Activated CD4-positive, alpha-beta T cell treated with anti-CD3 and anti-CD28 coated beads, Interleukin-2, amount 10 ng/mL, durations not matched to agents 24 days and 14 days (primary cell): ENCODE measurements at regions of chr1 and their contacts with region 1.

Region 1: DNA sequence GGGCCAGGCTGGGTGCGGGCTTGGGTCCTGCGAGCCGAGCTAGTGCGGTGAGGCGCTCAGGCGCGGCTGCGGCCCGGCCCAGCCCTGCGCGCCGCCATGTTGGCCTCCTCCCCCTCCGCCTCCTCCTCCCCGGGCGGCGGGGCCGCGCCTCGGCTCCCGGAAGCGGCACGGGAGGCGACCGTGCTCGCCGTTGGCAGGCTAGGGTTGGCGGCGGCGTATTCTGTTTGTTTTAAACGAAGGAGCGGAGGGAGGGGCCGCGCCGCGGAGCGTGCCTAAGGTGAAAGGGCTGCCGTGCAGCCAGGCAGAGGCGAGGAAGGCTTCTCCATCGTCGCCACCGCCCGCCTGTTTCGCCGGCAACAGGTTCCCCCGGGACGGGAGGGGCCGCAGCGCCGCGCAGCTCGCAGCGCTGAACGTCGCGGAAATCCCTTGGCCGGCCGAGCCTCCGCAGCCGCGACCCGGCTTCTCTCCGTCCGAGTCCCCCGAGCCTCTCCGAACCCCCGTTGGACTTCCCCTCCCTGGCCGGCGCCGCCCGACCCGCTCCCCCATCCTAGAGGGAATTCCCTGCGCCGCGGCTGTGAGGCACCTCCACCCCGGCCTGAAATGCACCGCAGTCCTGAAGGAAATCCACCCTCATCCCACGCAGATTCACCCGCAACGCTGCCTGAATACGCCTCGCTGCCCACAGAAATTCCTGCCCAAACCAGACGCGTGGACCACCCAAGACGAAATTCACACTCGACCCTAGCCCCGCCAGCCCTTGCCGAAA is at the start of gene USP24:
- DNase-seq: peak; percentile 96
- H3K4me3 Mint-ChIP-seq: peak within 1 kb of the TSS; percentile 97
- H3K27ac Mint-ChIP-seq: peak within 1 kb of the TSS; percentile 93
- H3K4me1 Mint-ChIP-seq: peaks cover 57% of the 10 kb centered on the region
- H3K27me3 Mint-ChIP-seq: peaks cover under 1% of the 10 kb centered on the region
- total RNA-seq, gene USP24: 48.4 and 49.5 TPM in 2 replicates

Region 2: DNA sequence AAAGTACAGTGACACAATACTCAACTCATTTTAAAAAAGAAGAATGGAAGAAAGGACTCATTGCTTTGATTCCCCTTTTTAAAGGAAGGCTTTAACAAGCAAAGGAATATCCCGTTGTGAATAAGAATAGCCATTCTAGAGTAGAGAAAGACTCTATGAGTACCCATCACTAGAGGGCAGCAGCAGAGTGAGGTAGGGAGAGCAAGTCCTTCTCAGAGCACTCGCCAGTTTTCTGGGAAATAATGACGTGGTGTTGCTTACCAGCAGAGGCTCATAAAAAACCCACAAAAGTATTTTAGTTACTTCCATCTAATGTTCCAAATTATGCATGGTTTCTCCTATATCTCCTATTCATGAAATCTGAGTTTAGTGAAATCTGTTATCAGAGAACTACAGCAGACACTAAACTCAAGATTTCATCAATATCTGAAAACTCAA is 74.9 kb before region 1 on chr1:
- intact Hi-C with region 1: loop called (anchors 2 kb)
- DNase-seq: peak; percentile 93
- H3K4me3 Mint-ChIP-seq: peak overlapping the region; percentile 6
- H3K27ac Mint-ChIP-seq: peak overlapping the region; percentile 52
- H3K4me1 Mint-ChIP-seq: peaks cover 13% of the 10 kb centered on the region
- H3K27me3 Mint-ChIP-seq: no peaks in the 10 kb centered on the region

Region 3: DNA sequence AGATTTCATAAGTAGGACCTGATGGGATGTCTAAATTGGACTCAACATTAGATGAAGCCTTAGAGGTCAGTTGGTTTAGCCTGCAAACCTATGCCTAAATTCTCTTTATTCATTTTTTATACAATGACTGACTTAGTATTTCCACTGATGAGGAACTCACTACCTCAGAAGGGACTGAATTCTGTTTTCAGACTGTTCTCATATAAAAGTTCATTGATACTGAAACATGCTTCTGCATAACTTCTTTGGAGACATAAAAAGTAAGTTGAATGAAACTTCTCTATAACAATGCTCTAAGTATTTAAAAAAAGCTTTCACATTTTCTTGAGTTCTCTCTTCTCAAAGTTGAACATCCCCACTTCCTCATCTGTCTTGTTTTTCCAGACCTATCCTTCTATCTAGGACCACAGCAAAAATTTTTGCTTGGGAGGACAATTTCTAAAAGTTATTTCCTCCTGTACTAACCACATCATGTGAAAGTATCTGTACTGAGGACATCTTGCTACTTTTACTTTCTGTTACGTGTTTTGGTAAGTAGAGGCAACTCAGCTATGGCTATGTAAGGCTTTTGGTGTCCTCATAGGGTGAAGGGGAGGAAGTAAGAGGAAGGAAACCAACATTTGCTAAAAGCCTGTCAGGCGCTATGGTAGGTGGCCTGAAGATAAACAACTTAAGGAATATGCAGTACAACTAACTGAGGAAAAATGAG is 64.4 kb before region 1 on chr1:
- intact Hi-C with region 1: loop called (anchors 5 kb)
- DNase-seq: peak; percentile 74
- H3K4me3 Mint-ChIP-seq: peak overlapping the region; percentile 74
- H3K27ac Mint-ChIP-seq: peak overlapping the region; percentile 83
- H3K4me1 Mint-ChIP-seq: peaks cover 19% of the 10 kb centered on the region
- H3K27me3 Mint-ChIP-seq: no peaks in the 10 kb centered on the region

Region 4: DNA sequence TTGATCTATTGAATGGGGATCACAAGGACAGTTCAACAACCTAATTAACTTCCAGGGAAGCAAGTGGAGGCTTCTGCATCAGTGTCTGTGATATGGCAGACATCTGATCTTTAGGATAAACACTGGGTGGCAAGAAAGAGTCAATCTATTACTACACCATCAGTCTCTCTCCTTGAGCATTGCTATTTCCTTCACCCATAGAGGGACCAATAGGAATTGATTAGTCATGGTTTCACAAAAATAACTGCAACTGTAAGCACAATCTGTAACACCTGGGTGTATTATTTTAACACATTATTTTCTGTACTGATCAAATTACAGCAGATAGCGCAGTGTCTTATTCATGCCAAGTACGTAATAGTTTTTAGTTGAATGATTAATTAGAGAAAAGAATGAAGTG is 50.5 kb before region 1 on chr1:
- intact Hi-C with region 1: loop called (anchors 5 kb)
- DNase-seq: no peak
- H3K4me3 Mint-ChIP-seq: no peak overlapping the region
- H3K27ac Mint-ChIP-seq: peak overlapping the region; percentile 78
- H3K4me1 Mint-ChIP-seq: peaks cover 30% of the 10 kb centered on the region
- H3K27me3 Mint-ChIP-seq: no peaks in the 10 kb centered on the region

Region 5: GRCh38 chr1:55204997-55205396 is 10.4 kb before region 1 on chr1:
- intact Hi-C with region 1: loop called (anchors 1 kb)
- DNase-seq: peak; percentile 52
- H3K4me3 Mint-ChIP-seq: no peak overlapping the region
- H3K27ac Mint-ChIP-seq: peak overlapping the region; percentile 3
- H3K4me1 Mint-ChIP-seq: peaks cover 46% of the 10 kb centered on the region
- H3K27me3 Mint-ChIP-seq: no peaks in the 10 kb centered on the region

Region 6: GRCh38 chr1:55257958-55258357 is 42.5 kb after region 1 on chr1:
- intact Hi-C with region 1: loop called (anchors 1 kb)
- DNase-seq: peak; percentile 91
- H3K4me3 Mint-ChIP-seq: peak overlapping the region; percentile 19
- H3K27ac Mint-ChIP-seq: peak overlapping the region; percentile 58
- H3K4me1 Mint-ChIP-seq: peaks cover 16% of the 10 kb centered on the region
- H3K27me3 Mint-ChIP-seq: peaks cover 12% of the 10 kb centered on the region

Region 7: DNA sequence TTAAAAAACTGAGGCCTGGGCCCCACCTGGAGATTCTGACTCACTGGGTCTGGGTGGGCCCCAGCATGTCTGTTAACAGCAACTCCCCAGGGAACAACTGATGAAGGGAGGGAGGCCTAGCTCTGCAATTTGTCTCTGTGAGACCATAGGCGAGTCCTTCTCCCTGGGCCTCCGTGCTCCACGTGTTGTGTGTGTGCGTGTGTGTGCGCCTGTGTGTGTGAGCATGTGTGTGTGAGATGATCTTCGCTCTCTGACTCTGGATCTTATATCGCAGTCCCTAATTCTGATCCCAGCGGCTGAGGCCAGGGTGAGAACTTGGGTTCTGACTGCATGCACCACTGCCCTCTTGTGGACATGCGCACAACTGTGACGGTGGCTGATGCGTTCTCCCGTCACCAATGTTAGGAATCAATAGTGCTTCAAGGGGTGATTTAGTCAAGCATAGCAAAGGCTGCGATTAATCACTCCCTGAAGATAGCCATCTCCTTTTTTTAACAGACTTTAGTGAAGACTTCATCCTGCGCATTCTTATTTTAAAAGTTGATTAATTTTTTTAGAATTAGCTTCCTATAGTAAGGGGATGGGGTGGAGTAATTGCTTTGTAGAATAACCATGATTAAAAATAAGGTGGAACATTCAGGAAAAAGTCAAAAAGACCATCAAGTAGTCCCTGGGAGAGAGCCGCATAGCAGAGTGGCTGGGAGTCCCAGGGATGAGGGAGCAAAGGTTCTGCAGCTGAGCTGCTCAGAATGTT is 62.1 kb after region 1 on chr1:
- intact Hi-C with region 1: loop called (anchors 1 kb)
- DNase-seq: peak; percentile 94
- H3K4me3 Mint-ChIP-seq: peak overlapping the region; percentile 50
- H3K27ac Mint-ChIP-seq: peak overlapping the region; percentile 76
- H3K4me1 Mint-ChIP-seq: peaks cover 26% of the 10 kb centered on the region
- H3K27me3 Mint-ChIP-seq: peaks cover 9% of the 10 kb centered on the region